Heart right ventricle (tissue), 16 donors: ENCODE measurements at regions of chr1 and their contacts with region 1.

Region 1: DNA sequence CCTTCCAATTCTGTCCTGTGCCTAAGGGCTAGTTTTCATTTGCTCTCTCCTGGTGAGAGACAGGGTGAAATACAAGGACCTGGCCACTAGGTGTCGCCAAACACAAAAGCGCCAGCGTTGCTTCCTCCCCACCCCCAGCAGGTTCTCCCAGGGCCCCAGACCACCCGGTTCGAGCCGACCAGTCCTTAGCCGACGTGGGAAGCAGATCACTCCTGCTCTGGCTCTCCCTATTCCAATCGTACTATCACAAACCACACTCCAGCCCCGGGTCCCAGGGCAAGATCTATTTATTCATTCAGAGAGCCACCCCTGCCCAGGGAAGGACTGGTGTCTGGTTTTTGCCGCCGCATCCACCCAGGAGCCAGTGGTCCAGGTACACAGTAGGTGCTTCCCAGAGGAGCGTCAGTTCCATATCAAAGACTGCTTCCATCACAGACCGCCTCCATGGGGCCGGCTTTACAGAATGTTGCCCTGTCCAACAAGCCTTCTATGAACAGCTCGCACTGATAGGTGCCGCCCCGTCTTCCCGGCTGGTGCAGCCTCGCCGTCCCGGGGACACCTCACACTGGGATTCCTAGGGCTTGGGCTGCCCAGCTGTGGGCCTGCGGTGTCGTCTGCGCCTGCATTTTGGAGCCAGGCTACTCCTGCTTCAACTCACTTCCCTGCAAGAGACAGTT is 35.0 kb downstream of the CTNNBIP1 start:
- DNase-seq: peak; percentile 66 to 76
- ATAC-seq: peak; percentile 77 to 92 (median 88)
- H3K4me3 ChIP-seq: peak overlapping the region in 4 of 10 donors; percentile 16 to 26 (median 24)
- H3K27ac ChIP-seq: peak overlapping the region in 9 of 10 donors; percentile 14 to 73 (median 46)
- H3K4me1 ChIP-seq: peaks cover 7 to 49% (median 36%) of the 10 kb centered on the region in 9 donors
- H3K27me3 ChIP-seq: no peaks in the 10 kb centered on the region
- CTCF ChIP-seq: peak; percentile 91 to 95 (median 93)

Region 2: DNA sequence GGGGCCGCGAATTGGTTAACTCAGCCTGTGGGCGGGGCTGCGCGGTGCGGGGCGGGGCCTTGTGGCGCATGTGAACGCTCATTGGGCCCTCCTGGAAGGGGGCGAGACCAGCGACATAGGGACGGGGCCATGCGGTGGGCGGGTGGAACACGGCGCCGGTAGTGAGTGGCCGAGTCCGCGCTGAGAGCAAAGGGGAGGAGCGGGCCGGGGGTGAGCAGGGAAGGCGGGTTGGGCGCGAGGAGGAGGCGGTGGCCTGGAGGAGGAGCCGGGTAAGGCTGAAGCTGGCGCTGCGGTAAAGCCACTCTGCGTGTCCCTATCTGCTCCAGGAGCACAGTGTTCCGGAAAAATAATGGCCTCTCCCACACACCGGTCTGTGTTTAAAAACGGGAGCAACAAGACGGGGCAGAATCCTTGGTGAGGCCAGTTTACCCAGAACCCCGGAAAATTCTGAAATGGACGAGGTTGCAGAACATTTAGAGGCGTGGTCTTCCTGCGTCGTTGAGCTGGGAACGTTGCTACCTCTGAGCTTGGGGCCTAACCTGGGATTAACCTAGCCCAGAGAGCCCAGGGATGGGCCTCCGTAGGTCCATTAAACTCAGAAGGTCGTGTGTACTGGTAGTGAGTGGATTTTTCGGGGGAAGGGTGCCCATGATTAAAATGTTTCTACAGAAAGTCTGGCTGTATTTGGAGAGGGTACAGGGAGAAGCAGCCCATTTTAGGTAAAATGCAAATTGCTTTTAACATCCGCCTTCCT is 35.5 kb after region 1 on chr1:
- intact Hi-C with region 1: loop called (anchors 1 to 5 kb)
- DNase-seq: peak; percentile 100
- ATAC-seq: peak; percentile 97 to 99 (median 98)
- H3K4me3 ChIP-seq: peak overlapping the region; percentile 20 to 64 (median 59)
- H3K27ac ChIP-seq: peak overlapping the region; percentile 85 to 99 (median 92)
- H3K4me1 ChIP-seq: peaks cover 5 to 67% (median 32%) of the 10 kb centered on the region in 9 donors
- H3K27me3 ChIP-seq: no peaks in the 10 kb centered on the region
- CTCF ChIP-seq: peak in 1 of 9 donors; percentile 8

Region 3: DNA sequence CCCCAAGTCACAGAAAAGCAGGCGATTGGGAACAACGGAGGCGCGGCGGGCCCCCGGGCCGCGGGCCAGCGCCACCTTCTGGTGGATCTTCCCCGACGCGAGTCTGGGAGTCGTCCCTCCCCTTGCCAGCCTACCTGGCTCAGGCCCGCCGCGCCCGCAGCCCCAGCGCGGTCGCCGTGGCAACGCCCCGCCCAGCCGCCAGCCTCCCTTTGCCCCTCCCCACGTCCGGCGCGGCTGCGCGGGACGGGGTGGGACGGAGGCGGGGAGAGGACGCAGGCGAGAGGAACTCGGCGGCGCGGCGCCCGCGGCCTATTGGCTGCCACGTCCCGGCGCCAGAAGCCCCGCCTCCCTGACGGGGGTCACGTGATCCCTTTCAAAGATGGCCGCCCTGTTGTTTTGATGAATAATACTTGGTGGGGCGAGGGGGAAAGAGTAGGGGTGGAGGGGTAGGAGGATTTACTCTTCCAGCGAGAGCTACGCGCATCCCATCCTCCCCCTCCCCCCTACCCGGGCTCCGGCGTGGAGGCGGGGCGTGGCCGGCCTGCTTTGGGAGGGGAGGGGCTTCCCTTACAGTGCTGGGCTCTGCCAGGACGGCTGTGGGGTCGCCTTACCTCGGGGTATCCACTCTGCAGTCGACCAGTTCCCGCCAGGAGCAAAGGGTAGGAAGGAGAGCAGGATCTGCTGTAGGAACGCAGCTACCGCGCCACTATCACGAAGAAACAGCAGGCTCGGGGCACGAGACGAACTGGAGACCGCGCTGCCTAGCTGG is 157.7 kb after region 1 on chr1 and contains the start of gene UBE4B:
- intact Hi-C with region 1: loop called in 6 of 10 experiments (anchors 1 to 10 kb)
- DNase-seq: peak; percentile 97 to 99
- ATAC-seq: peak; percentile 99 to 100 (median 100)
- H3K4me3 ChIP-seq: peak within 1 kb of the TSS; percentile 87 to 100 (median 98)
- H3K27ac ChIP-seq: peak within 1 kb of the TSS; percentile 85 to 98 (median 95)
- H3K4me1 ChIP-seq: peaks cover 0 to 47% (median 28%) of the 10 kb centered on the region in 9 donors
- H3K27me3 ChIP-seq: no peaks in the 10 kb centered on the region
- CTCF ChIP-seq: peak; percentile 80 to 96 (median 88)
- total RNA-seq, gene UBE4B: 59.0 to 87.3 (median 69.2) TPM

Region 4: DNA sequence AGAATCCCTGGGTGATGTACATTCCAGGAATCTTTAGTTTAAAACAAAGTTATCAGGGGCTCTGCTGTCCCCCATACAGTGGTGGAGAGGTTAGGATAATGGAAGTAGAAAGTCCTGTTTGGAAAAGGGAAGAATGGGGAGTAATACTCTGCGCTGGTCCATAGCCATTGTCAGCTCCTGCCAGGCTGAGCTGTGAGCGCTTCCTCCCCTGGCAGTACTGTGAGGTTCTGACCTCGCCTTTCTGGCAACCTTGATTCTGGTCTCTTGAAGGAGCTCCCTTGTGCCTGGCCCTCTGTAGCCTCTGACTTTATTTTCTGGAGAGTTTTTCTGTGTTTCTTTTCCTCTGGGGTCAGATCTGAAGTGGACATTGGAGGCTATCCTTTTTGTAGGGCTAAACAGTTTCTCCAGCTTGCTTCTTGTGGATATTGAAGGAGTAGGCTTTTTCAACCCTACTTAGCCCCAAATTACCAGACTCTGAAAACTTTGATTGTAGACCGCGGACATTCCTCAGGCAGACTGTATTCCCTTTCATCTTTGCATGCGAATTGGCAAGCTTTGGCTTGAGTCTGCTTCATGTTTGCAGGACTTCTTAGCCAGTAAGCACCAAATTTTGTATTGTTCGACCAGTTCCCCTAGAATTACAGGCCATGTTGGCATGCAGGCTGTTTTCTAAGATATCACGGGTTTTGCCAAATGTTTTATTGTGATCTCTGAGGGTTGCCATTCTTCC is 171.4 kb after region 1 on chr1:
- intact Hi-C with region 1: no loop called
- DNase-seq: no peak
- ATAC-seq: peak; percentile 43 to 84 (median 78)
- H3K4me3 ChIP-seq: no peak overlapping the region
- H3K27ac ChIP-seq: peak overlapping the region in 7 of 10 donors; percentile 18 to 67 (median 23)
- H3K4me1 ChIP-seq: peaks cover 4 to 62% (median 38%) of the 10 kb centered on the region in 9 donors
- H3K27me3 ChIP-seq: no peaks in the 10 kb centered on the region
- CTCF ChIP-seq: no peak